ENCODE measurements at regions of chr11 and their contacts with region 1.

Region 1: DNA sequence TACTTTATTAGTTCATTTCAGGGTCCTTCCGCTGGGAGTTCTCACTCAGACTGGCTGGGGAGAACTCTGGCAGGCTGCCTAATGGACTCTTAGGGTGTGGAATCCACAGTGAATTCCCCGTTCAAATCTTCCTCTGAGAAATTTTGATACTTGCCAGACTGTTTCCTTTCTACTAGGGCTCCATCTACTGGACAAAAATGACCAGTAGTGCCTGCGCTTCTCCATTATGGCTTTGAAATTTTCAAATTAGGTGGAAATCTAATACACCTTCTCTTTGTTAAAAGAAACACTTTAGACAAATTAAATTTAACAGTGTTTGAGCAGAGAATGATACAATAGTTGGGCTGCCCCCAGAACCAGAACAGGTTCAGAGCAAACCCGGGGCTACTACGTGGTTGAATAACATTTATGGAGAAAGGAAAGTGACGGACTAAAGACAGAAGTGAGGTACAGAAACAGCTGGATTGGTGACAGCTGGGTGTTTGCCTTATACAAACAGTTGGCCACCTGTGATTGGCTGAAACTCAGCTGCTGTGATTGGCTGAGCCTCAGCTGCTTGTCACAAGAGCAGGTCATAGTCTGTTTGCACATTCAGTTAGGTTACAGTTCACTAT is 52.9 kb upstream of the FDX1 start:
- DNase-seq: peak; percentile 87
- H3K4me3 ChIP-seq: peak overlapping the region in 2 of 4 donors; percentile 14 to 30
- H3K27ac ChIP-seq: peak overlapping the region; percentile 21 to 63 (median 49)
- H3K4me1 ChIP-seq: peaks cover 0 to 12% (median 5%) of the 10 kb centered on the region in 4 donors
- H3K27me3 ChIP-seq: no peaks in the 10 kb centered on the region
- CTCF ChIP-seq: peak; percentile 52 to 76 (median 60)
- EP300 ChIP-seq: no peak
- POLR2A ChIP-seq: no peak

Region 2: DNA sequence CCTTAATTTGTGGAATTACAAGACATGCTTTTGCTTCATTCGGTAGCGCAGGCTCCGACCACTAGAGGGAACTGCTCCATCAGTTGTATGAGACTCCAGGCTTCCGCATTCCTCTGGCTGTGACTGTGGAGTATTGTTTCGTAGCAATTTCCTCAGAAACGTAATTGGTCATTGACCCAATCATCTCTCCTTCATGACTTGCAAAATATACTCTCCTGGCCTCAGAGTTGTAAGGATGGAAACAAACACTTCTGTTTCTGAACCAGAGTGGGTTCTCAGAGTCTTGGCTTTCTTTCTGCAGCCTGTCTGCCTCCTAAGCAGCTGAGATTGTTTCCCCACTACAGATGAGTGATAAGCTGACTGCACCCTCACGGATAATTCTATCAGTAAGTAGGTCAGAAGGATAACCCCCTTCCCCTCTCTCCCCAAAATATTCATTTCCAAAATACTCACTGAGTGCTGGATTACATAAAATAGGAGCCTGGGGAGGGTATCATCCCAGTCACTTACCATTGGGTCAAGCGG is 430.4 kb before region 1 on chr11:
- intact Hi-C with region 1: loop called (anchors 10 kb)
- DNase-seq: peak; percentile 89
- H3K4me3 ChIP-seq: peak overlapping the region in 3 of 4 donors; percentile 20 to 38 (median 38)
- H3K27ac ChIP-seq: peak overlapping the region; percentile 54 to 62 (median 58)
- H3K4me1 ChIP-seq: peaks cover 0 to 5% (median 2%) of the 10 kb centered on the region in 4 donors
- H3K27me3 ChIP-seq: no peaks in the 10 kb centered on the region
- CTCF ChIP-seq: peak; percentile 74 to 89 (median 85)
- EP300 ChIP-seq: no peak
- POLR2A ChIP-seq: no peak

Region 3: DNA sequence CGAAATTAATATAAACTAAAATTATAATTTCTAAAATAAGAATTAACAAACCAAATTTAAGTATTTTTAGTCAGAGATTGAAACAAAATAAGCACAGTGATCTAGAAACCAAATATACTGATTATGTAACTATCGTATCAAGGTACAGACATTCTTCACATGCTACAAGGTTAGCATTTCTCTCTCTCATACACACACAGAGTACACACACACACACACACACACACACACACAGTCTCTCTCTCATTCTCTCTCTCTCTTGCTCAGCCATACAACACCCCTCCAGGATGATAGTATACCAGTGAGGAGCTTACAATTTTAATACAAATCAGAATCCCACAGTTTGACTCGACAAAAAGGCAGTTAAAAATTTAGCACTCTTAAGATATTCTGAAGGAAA is 146.4 kb before region 1 on chr11:
- intact Hi-C with region 1: no loop called
- DNase-seq: no peak
- H3K4me3 ChIP-seq: no peak overlapping the region
- H3K27ac ChIP-seq: no peak overlapping the region
- H3K4me1 ChIP-seq: no peaks in the 10 kb centered on the region
- H3K27me3 ChIP-seq: no peaks in the 10 kb centered on the region
- CTCF ChIP-seq: no peak
- EP300 ChIP-seq: no peak
- POLR2A ChIP-seq: no peak

Region 4: DNA sequence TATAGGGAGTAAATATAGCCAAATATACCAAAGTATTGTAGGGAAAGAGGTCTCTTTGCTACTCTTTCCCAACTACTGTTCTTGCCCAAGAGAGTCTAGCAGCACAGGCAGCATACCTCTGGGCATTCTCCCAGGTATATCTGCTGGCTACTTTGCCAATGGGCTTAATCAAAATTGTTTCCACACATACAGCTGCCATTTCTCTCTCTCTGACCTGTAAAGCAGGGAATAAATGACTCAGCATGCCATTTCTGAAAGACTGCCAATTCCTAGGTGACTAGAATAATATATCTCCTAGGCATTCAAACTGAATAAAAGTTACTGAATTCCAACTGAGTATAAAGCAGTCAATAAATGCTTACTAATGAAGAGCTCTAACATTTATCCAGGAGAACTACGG is 125.0 kb before region 1 on chr11:
- intact Hi-C with region 1: no loop called
- DNase-seq: no peak
- H3K4me3 ChIP-seq: no peak overlapping the region
- H3K27ac ChIP-seq: no peak overlapping the region
- H3K4me1 ChIP-seq: peaks cover 0 to 14% (median 8%) of the 10 kb centered on the region in 4 donors
- H3K27me3 ChIP-seq: no peaks in the 10 kb centered on the region
- CTCF ChIP-seq: no peak
- EP300 ChIP-seq: no peak
- POLR2A ChIP-seq: no peak

Region 5: DNA sequence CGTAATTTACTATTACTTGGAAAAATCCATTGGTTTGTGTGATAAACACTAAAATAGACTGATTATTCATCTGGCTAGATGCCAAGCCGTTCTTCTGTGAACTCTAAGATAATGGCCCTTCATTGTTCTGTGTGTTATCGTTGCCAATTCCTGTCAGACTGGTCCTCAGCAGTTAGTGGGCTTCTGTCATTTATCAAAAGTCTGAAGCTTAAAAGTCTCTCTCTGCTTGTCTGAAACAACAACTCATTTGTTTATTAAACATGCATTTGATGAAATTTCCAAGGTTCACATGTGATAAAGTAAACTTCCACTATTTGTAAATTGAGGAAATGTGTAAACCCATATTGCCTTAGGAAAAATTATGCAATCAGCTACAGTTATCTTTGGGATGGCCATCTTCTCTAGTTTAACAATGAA is 59.3 kb before region 1 on chr11:
- intact Hi-C with region 1: no loop called
- DNase-seq: no peak
- H3K4me3 ChIP-seq: no peak overlapping the region
- H3K27ac ChIP-seq: no peak overlapping the region
- H3K4me1 ChIP-seq: no peaks in the 10 kb centered on the region
- H3K27me3 ChIP-seq: no peaks in the 10 kb centered on the region
- CTCF ChIP-seq: no peak
- EP300 ChIP-seq: no peak
- POLR2A ChIP-seq: no peak

Measured in sigmoid colon (tissue), 7 donors.